Cardiac septum (tissue), 1 donor: ENCODE measurements at regions of chr2 and their contacts with region 1.

Region 1: GRCh38 chr2:235414422-235414821 is 79.4 kb upstream of the AGAP1 start:
- DNase-seq: peak; percentile 83

Region 2: GRCh38 chr2:235433860-235434259 is 19.4 kb after region 1 on chr2:
- intact Hi-C with region 1: loop called (anchors 1 kb)
- DNase-seq: no peak

Region 3: GRCh38 chr2:235511187-235511661 is 96.8 kb after region 1 on chr2:
- intact Hi-C with region 1: no loop called
- DNase-seq: no peak